PC-9 (cell line): ENCODE measurements at regions of chr15 and their contacts with region 1.

Region 1: DNA sequence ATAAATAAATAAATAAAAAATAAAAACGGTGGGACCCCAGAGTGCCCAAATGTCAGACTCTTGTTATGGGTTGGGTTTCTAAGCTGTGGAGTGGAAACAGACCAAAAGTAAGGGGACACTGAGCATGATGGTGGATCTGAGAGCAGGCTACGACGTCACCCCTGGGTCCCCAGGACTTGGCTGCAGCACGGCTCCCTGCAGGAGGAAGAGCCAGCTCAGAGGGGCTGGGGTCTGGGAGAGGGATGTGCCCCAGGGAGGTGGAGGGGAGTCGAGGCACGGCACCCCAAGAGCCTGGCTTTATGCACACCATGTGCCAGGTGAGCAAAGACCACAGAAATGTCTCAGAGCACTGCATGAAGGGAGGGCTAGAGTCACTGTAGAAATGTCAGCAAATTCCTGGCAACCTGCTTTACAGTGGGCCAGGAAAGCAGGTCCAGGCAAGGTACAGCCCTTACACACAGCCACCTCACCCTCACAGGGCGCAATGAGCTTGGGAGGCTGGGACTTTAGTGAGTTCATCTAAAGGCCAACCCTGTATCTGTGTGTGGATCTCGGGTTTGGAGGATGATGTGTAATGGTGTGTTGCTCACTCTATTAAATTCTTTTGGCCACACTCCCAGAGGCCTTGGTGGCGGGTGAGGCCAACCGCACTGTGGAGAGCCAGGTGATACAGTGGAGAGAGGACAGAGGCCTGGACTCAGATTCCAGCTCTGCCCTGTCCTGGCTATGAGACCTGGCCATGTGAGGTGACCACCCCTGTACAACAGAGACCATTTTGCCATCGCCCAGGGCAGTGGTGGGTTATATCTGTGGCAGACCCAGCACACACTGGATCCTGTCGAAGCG is 14.1 kb downstream of the CTSH start:
- DNase-seq: peak; percentile 89 to 98
- H3K4me3 ChIP-seq: no peak overlapping the region
- H3K27ac ChIP-seq: peak overlapping the region; percentile 85
- H3K4me1 ChIP-seq: peaks cover 22% of the 10 kb centered on the region
- H3K27me3 ChIP-seq: no peaks in the 10 kb centered on the region
- CTCF ChIP-seq: no peak

Region 2: GRCh38 chr15:77830051-77830477 is 1100.7 kb before region 1 on chr15:
- CTCF ChIA-PET with region 1: no interaction called
- POLR2A ChIA-PET with region 1: no interaction called
- intact Hi-C with region 1: no loop called
- DNase-seq: no peak
- H3K4me3 ChIP-seq: no peak overlapping the region
- H3K27ac ChIP-seq: no peak overlapping the region
- H3K4me1 ChIP-seq: no peaks in the 10 kb centered on the region
- H3K27me3 ChIP-seq: peaks cover 14% of the 10 kb centered on the region
- CTCF ChIP-seq: no peak

Region 3: GRCh38 chr15:78850941-78851755 is 79.6 kb before region 1 on chr15:
- CTCF ChIA-PET with region 1: no interaction called
- POLR2A ChIA-PET with region 1: no interaction called
- intact Hi-C with region 1: no loop called
- DNase-seq: no peak
- H3K4me3 ChIP-seq: no peak overlapping the region
- H3K27ac ChIP-seq: no peak overlapping the region
- H3K4me1 ChIP-seq: no peaks in the 10 kb centered on the region
- H3K27me3 ChIP-seq: no peaks in the 10 kb centered on the region
- CTCF ChIP-seq: no peak

Region 4: DNA sequence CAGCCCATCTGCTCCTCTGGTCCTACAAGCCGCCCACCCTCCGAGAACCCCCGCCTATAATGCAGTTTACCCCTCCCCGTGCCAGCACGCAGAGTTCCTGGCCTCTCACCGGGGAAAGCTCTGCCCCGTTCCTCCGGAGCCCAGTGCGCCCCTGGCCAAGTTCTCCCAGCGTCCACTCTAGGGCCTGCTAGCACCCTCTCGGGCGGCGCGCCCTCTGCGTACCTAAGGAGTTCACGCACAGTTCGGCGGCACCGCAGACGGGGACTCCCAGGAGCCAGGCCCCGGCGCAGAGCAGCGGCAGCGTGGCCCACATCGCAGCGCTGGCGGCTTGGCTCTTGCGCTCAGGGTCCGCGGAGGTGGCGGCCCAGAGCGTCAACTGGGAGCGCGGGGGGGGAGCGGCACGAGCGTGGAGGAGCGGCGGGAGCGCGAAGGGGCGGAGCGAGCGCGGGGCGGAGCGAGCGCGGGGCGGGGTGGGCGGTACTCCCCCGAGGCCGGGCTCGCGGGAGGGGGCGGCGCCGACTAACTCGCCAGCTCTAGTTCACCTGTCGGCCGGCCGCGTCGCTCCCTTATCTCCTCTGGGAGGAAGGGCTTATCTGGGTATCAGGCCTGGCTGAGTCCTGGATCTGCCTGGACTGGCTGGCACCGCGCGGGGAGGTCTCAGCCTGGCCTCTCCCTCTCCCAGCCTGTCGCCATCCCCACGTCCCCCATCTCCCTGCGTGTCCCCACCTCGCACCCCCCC is 14.1 kb after region 1 on chr15 and contains the start of gene CTSH:
- CTCF ChIA-PET with region 1: interaction called, 4 read pairs
- POLR2A ChIA-PET with region 1: no interaction called
- intact Hi-C with region 1: loop called (anchors 2 kb)
- DNase-seq: peak; percentile 60 to 83
- H3K4me3 ChIP-seq: peak within 1 kb of the TSS; percentile 58
- H3K27ac ChIP-seq: no peak within 1 kb of the TSS
- H3K4me1 ChIP-seq: peaks cover 29% of the 10 kb centered on the region
- H3K27me3 ChIP-seq: no peaks in the 10 kb centered on the region
- CTCF ChIP-seq: no peak
- total RNA-seq, gene CTSH: 101 and 128 TPM in 2 replicates

Region 5: DNA sequence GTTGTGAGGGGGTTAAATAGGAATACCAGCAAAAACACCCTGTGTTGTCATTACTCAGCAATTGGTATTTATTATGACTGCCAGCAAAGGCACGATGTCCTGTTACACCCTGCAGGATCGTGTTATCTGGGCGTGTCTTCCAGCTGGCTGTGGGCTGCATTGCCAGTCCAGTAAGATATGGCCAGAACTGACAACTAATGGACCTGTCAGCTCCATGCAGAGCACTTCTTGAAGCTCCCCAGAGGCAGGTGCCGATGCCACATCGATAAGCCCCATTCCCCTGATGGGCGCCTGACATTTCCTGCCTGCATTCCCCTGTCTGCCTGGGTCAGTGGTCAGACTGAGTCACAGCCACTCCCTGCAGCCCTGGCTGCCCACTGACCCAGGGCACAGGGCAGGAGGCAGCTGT is 239.5 kb after region 1 on chr15:
- CTCF ChIA-PET with region 1: no interaction called
- POLR2A ChIA-PET with region 1: no interaction called
- intact Hi-C with region 1: loop called (anchors 1 kb)
- DNase-seq: peak; percentile 71 to 91
- H3K4me3 ChIP-seq: peak overlapping the region; percentile 7; the same call in 1 of the 2 replicates
- H3K27ac ChIP-seq: peak overlapping the region; percentile 83
- H3K4me1 ChIP-seq: peaks cover 52% of the 10 kb centered on the region
- H3K27me3 ChIP-seq: no peaks in the 10 kb centered on the region
- CTCF ChIP-seq: no peak